Lower leg skin (tissue), 4 donors: ENCODE measurements at regions of chr1 and their contacts with region 1.

Region 1: DNA sequence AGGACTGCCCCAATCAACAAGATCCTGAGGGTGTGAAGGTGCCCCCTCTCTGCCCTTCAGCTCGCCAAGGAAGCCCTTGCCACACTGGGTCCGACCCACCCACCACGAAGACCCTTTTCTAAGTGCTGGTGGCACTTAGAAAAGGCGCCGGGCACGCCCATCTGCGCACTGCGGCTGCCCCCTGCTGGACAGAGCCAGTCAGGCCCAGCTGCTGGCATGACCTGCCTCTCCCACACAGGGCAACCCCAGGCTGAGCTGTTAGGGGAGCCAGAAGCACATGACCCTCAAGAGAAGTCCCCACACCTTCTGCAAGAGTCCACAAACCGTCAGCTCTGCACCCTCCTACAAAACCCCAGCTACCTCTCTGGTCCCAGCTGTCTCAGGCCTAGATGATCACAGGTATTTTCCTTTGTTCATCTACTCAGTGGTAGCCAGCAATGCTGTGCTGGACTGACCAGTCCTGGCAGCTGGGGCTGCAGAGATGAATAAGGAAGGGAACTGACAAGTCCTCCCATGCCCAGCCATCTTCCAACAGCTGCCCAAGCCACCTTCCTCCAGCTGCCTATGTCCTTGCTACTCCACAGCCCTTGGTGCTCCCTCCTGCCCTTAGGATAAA is 40.0 kb upstream of the ZC3H12A start:
- DNase-seq: peak in 1 of 2 donors; percentile 41
- H3K4me3 ChIP-seq: no peak overlapping the region
- CTCF ChIP-seq: peak in 1 of 3 donors; percentile 54
- POLR2A ChIP-seq: no peak

Region 2: DNA sequence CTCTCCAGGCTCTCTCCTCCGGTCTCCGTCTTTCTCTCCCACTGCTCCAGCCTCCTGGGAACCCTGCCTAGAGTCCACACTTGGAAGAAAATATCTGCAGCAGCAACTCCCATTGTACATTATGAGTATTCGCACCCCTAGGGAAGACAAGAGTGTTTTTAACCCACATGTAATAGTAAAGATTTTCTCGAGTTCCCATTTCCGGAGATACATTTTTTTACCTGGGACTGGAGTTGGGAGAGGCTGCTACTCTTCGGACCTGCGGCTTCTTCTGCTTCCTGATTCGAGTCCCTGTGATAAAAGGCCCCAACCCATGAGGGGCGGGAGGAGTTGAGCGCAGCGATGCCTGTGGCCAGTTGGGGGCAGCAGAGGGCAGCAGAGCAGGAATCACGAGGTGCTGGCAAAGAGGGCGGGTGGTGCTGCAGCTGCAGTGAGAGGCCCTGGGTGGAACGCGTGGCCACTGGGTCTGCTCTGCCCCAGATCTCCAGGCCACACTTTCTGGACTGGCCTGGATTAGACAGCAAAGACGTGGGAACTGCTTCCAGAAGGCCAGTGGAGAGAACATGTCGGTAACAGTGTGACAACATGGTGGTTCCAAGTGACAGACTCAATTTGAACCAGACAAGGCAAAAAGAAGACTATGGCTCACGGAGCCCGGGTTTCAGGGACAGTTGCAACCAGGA is 730.7 kb before region 1 on chr1:
- intact Hi-C with region 1: loop called (anchors 10 kb)
- DNase-seq: peak; percentile 45 to 88
- H3K4me3 ChIP-seq: no peak overlapping the region
- CTCF ChIP-seq: no peak
- POLR2A ChIP-seq: no peak

Region 3: DNA sequence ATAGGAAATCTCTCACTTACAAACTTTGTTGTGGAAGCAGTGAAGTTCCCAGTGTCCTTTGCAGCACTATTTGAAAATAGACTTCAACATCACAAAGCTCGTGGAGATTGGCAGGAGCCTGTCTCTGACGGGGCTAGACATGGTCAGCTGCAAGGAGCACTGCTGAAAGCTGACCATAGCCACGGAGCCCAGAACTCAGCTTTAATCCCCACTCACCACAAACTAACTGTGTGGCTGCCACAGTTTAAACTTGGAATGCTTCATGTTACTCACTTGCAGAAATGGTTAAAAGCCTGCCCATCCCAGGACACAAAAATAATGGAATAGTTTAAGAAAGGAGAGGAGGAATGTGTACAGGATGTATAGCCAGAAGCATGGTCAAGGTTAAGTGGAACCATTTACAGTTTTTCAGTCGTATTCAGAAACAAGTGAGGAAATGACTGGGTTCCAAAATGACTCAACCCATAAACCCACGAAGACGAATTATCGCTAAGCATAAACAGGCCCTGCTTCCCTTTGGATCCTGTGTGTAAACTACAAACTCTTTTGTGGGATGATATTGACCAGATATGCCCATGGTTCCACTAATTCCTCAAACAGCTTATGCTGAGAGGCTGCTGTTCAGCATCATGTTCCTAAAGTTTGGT is 140.6 kb after region 1 on chr1:
- intact Hi-C with region 1: no loop called
- DNase-seq: peak in 1 of 2 donors; percentile 21
- H3K4me3 ChIP-seq: no peak overlapping the region
- CTCF ChIP-seq: no peak
- POLR2A ChIP-seq: no peak